BJ (cell line): ENCODE measurements at regions of chr9 and their contacts with region 1.

Region 1: GRCh38 chr9:5450359-5451091 is at the start of gene CD274:
- DNase-seq: peak; percentile 49
- H3K4me3 ChIP-seq: peak within 1 kb of the TSS; percentile 72
- H3K27me3 ChIP-seq: no peaks in the 10 kb centered on the region
- CTCF ChIP-seq: peak; percentile 75
- polyA plus RNA-seq, gene CD274: 3.8 and 4.4 TPM in 2 replicates

Region 2: DNA sequence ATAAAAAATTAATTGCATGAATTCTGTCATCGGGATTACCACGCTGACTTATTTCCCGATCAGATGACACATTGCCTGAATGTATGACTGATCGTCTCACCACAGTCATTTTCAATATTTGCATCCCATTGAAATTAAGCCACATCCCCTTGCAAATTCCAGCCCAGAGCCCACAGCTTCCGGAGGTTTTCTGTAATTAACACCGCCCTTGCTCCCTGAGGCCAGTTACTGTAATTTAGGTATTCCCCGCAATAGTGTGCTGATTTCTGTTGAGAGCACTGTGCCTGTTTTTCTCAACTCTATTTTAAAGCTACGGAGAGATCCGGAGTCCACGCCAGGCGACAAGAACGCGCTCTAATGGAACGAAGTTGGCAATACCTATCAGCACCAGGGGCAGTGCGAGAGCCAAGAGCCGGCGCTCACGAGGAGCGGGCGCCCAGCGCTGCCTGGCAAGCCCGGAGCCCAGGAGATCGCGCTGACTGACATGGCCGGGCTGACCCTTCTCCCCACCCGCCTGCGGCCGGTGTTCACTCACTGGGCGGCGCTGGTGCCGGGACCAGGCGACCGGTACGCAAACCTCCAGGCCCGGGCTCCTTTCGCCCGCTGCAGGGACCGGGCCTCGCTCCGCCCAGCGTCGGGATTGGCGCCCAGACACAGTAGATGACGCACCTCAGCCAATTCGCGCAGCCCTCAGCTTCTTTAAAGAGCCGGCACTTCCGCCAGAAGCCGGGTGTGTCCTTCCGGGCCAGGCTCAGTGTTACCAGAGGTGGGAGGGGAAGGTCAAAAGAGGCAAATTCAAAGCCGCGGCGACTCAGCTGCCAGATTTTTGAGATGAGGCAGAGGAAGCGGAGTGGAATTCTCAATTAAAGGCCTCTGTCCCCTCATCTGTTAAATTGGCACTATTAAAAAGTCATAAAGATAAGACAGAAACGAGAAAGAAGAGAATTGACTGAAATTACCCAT is 13.0 kb before region 1 on chr9 and contains the start of gene PLGRKT:
- CTCF ChIA-PET with region 1: interaction called, 30 read pairs
- POLR2A ChIA-PET with region 1: interaction called, 4 read pairs
- DNase-seq: peak; percentile 62
- H3K4me3 ChIP-seq: peak within 1 kb of the TSS; percentile 64
- H3K27me3 ChIP-seq: no peaks in the 10 kb centered on the region
- CTCF ChIP-seq: no peak; the same call in none of the 2 replicates
- polyA plus RNA-seq, gene PLGRKT: 7.7 and 14.2 TPM in 2 replicates

Region 3: GRCh38 chr9:5536684-5537083 is 86.2 kb after region 1 on chr9:
- CTCF ChIA-PET with region 1: no interaction called
- POLR2A ChIA-PET with region 1: no interaction called
- DNase-seq: no peak
- H3K4me3 ChIP-seq: no peak overlapping the region
- H3K27me3 ChIP-seq: no peaks in the 10 kb centered on the region
- CTCF ChIP-seq: no peak

Region 4: GRCh38 chr9:5626727-5627634 is 176.5 kb after region 1 on chr9:
- CTCF ChIA-PET with region 1: interaction called, 3 read pairs
- POLR2A ChIA-PET with region 1: interaction called, 10 read pairs
- DNase-seq: peak; percentile 57
- H3K4me3 ChIP-seq: peak overlapping the region; percentile 63; the same call in 1 of the 2 replicates
- H3K27me3 ChIP-seq: no peaks in the 10 kb centered on the region
- CTCF ChIP-seq: no peak

Region 5: GRCh38 chr9:5909976-5910375 is 459.5 kb after region 1 on chr9:
- CTCF ChIA-PET with region 1: no interaction called
- POLR2A ChIA-PET with region 1: no interaction called
- DNase-seq: no peak
- H3K4me3 ChIP-seq: no peak overlapping the region
- H3K27me3 ChIP-seq: no peaks in the 10 kb centered on the region
- CTCF ChIP-seq: no peak